Naive thymus-derived CD4-positive, alpha-beta T cell (primary cell): ENCODE measurements at regions of chr10 and their contacts with region 1.

Region 1: GRCh38 chr10:49518982-49519578 is 19.8 kb downstream of the ERCC6 start:
- DNase-seq: peak in 5 of 9 donors; percentile 25 to 45 (median 43)
- ATAC-seq: peak; percentile 80
- H3K4me3 ChIP-seq: no peak overlapping the region
- H3K4me3 Mint-ChIP-seq: no peak overlapping the region
- H3K27ac ChIP-seq: no peak overlapping the region
- H3K27ac Mint-ChIP-seq: no peak overlapping the region
- H3K4me1 ChIP-seq: no peaks in the 10 kb centered on the region
- H3K4me1 Mint-ChIP-seq: peaks cover 0 to 22% (median 4%) of the 10 kb centered on the region in 7 donors
- H3K27me3 ChIP-seq: no peaks in the 10 kb centered on the region
- H3K27me3 Mint-ChIP-seq: no peaks in the 10 kb centered on the region

Region 2: DNA sequence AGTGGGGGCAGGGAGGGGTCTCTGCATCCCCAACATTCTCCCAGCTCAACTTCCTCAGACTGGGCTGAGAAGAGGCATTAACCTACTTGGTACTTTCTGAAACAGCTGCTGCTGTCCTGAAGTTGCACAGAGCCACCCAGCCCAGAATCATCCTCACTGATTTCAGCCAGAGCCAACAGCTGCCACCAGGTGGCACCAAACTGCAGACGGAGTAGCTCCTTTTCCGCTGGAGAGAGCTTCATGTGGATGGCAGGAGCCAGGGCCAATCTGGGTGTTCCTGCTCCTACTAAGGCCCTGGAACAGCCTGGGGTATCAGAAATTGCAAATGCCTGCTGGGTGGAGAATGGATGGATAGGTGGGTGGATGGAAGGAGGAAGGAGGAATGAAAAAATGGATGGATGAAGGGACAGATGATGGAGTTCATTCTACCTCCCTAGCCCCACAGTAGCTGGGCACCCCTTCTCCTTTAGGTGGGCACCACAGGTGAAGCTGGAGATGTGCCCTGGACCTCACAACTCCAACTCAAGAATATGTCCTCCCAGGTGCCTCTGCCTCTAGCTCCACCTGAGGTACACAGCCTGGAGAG is 111.4 kb before region 1 on chr10:
- CTCF ChIA-PET with region 1: interaction called, 27 read pairs
- POLR2A ChIA-PET with region 1: no interaction called
- intact Hi-C with region 1: loop called (anchors 1 kb)
- DNase-seq: peak; percentile 29 to 72 (median 56)
- ATAC-seq: peak; percentile 74
- H3K4me3 ChIP-seq: no peak overlapping the region
- H3K4me3 Mint-ChIP-seq: no peak overlapping the region
- H3K27ac ChIP-seq: no peak overlapping the region
- H3K27ac Mint-ChIP-seq: peak overlapping the region in 2 of 9 donors; percentile 2 to 22
- H3K4me1 ChIP-seq: no peaks in the 10 kb centered on the region
- H3K4me1 Mint-ChIP-seq: peaks cover 0 to 2% (median 0%) of the 10 kb centered on the region in 7 donors
- H3K27me3 ChIP-seq: no peaks in the 10 kb centered on the region
- H3K27me3 Mint-ChIP-seq: peaks cover 24 to 69% (median 60%) of the 10 kb centered on the region in 5 donors